ENCODE measurements at regions of chr19 and their contacts with region 1.

Region 1: DNA sequence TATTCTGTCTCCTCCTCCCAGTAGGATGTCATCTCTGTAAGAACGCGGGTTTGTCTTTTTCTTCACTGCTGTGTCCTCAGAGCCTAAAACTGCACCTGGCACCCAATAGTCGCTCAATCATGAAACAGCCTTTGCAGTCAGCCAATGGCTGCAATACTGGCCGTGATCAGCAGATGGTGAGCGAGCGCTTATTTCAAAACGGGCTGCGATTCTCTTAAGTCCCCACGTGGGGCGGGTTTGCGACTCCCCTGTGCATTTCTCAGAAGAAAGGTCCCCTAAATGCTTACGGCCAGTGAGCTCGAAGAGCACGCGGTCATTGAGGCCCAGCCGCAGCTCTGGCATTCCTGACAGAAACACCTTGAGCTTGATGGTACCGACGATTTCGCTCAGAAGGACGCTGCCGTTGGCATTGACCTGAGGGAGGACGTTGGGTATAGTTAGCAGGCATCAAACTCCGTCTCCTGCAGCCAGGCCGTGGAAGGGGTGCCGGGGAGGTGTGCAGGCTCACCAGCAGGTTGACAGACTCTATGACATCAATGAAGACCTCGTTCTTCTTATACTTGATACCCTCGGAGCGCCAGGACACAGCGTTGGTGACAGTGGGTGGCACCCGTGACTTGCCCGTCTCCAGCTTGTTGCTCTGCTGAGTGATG is 6.0 kb downstream of the AP1M2 start:
- DNase-seq: peak; percentile 36
- H3K4me3 ChIP-seq: peak overlapping the region in 1 of 4 donors; percentile 1
- H3K27ac ChIP-seq: no peak overlapping the region
- H3K4me1 ChIP-seq: peaks cover 0 to 17% (median 0%) of the 10 kb centered on the region in 3 donors
- H3K27me3 ChIP-seq: no peaks in the 10 kb centered on the region
- CTCF ChIP-seq: peak; percentile 96 to 99 (median 98)
- POLR2A ChIP-seq: no peak

Region 2: DNA sequence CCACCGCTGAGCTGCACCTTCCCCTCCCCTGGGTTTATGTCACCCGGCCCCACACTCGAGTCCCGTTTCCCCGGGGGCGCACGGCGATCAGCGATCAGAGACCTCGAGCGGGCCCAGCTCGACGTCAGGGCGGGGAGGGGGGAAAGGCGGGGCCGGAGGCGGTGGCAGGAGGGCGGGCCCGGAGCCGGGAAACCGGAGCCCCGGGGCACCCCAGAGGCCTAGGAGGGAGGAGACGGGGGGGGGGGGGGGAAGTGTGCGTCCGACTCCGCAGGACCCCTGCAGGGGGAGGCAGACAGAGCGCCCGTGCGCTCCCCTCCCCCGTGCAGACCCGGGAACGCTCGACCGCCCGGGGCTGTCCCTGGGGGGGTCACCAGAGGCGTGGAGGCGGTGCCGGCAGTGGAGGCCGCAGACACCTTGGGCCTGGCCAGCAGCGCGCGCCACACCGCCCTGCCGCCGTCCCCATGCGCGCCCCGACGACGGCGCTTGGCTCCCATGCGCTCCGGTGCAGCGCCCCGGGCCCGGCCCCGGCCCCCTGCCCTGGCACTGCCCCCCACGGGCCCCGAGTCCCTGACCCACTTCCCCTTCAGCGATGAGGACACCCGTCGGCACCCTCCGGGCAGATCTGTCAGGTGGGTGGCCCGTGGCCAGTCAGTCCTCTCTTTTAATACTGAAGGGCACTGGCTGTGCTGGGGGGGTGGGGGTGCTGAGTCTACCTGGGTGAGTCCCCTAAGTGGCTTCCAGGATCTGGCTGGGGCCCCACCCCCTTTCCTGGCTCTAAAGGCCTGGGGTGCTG is 149.0 kb before region 1 on chr19:
- intact Hi-C with region 1: no loop called
- DNase-seq: no peak
- H3K4me3 ChIP-seq: peak overlapping the region; percentile 35 to 78 (median 55)
- H3K27ac ChIP-seq: peak overlapping the region; percentile 46 to 82 (median 75)
- H3K4me1 ChIP-seq: peaks cover 13 to 31% (median 15%) of the 10 kb centered on the region in 3 donors
- H3K27me3 ChIP-seq: peaks cover 0 to 44% (median 4%) of the 10 kb centered on the region in 4 donors
- CTCF ChIP-seq: no peak
- POLR2A ChIP-seq: no peak

Region 3: GRCh38 chr19:10644260-10645007 is 63.3 kb after region 1 on chr19:
- intact Hi-C with region 1: loop called (anchors 2 kb)
- DNase-seq: no peak
- H3K4me3 ChIP-seq: no peak overlapping the region
- H3K27ac ChIP-seq: peak overlapping the region; percentile 56 to 75 (median 70)
- H3K4me1 ChIP-seq: peaks cover 6 to 46% (median 14%) of the 10 kb centered on the region in 3 donors
- H3K27me3 ChIP-seq: no peaks in the 10 kb centered on the region
- CTCF ChIP-seq: peak; percentile 75 to 95 (median 89)
- POLR2A ChIP-seq: no peak

Measured in esophagus squamous epithelium (tissue), 5 donors.